ENCODE measurements at regions of chr6 and their contacts with region 1.

Region 1: GRCh38 chr6:32529697-32530429 is at the start of gene HLA-DRB5:
- DNase-seq: peak; percentile 59
- H3K4me3 ChIP-seq: peak within 1 kb of the TSS; percentile 74
- H3K27ac ChIP-seq: peak within 1 kb of the TSS; percentile 51
- H3K4me1 ChIP-seq: peaks cover 7% of the 10 kb centered on the region
- CTCF ChIP-seq: no peak
- total RNA-seq, gene HLA-DRB5: 1.9 and 2.2 TPM in 2 replicates

Region 2: GRCh38 chr6:32472781-32473375 is 57.0 kb before region 1 on chr6:
- CTCF ChIA-PET with region 1: no interaction called
- POLR2A ChIA-PET with region 1: no interaction called
- intact Hi-C with region 1: loop called (anchors 2 kb)
- DNase-seq: no peak
- H3K4me3 ChIP-seq: peak overlapping the region; percentile 41
- H3K27ac ChIP-seq: peak overlapping the region; percentile 43
- H3K4me1 ChIP-seq: peaks cover 17% of the 10 kb centered on the region
- CTCF ChIP-seq: no peak

Region 3: DNA sequence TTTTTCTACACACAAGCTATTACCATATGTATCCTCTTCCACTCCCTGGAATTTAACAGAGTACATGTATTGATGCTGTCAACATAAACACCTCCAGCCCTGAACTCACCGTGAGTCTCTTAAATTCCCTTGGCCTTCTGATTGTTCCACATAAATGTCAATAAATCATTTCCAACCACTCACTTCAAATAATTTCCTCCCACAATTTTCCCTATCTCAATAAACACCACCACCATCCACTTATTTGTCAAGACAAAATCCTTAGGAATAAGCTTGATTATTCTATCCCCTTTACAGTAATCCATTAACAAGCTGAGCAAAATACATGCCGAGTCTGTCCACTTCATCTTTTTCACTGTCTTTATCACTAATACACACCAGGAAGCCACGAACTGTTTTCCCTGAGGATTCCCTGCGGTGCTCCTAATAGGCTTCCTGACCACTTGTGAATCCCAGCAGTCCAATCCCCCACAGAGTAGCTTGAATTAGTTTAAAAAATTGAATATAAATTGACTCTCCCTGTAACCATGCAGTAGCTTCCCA is 40.6 kb after region 1 on chr6:
- CTCF ChIA-PET with region 1: no interaction called
- POLR2A ChIA-PET with region 1: interaction called, 3 read pairs
- intact Hi-C with region 1: loop called (anchors 5 kb)
- DNase-seq: no peak
- H3K4me3 ChIP-seq: no peak overlapping the region
- H3K27ac ChIP-seq: no peak overlapping the region
- H3K4me1 ChIP-seq: no peaks in the 10 kb centered on the region
- CTCF ChIP-seq: no peak

Region 4: GRCh38 chr6:32589598-32590449 is 60.0 kb after region 1 on chr6 and contains the start of gene HLA-DRB1:
- CTCF ChIA-PET with region 1: no interaction called
- POLR2A ChIA-PET with region 1: interaction called, 4 read pairs
- intact Hi-C with region 1: loop called (anchors 2 kb)
- DNase-seq: peak; percentile 77
- H3K4me3 ChIP-seq: peak within 1 kb of the TSS; percentile 68
- H3K27ac ChIP-seq: peak within 1 kb of the TSS; percentile 56
- H3K4me1 ChIP-seq: peaks cover 22% of the 10 kb centered on the region
- CTCF ChIP-seq: no peak
- total RNA-seq, gene HLA-DRB1: 132 and 156 TPM in 2 replicates

Measured in OCI-LY7 (cell line).